ENCODE measurements at regions of chr19 and their contacts with region 1.

Region 1: GRCh38 chr19:6038634-6039405 is 60.9 kb upstream of the RANBP3 start:
- DNase-seq: peak in 1 of 2 donors; percentile 18
- H3K4me3 ChIP-seq: no peak overlapping the region
- H3K27ac ChIP-seq: no peak overlapping the region
- H3K4me1 ChIP-seq: peaks cover 6% of the 10 kb centered on the region
- H3K27me3 ChIP-seq: no peaks in the 10 kb centered on the region
- CTCF ChIP-seq: no peak
- POLR2A ChIP-seq: no peak

Region 2: DNA sequence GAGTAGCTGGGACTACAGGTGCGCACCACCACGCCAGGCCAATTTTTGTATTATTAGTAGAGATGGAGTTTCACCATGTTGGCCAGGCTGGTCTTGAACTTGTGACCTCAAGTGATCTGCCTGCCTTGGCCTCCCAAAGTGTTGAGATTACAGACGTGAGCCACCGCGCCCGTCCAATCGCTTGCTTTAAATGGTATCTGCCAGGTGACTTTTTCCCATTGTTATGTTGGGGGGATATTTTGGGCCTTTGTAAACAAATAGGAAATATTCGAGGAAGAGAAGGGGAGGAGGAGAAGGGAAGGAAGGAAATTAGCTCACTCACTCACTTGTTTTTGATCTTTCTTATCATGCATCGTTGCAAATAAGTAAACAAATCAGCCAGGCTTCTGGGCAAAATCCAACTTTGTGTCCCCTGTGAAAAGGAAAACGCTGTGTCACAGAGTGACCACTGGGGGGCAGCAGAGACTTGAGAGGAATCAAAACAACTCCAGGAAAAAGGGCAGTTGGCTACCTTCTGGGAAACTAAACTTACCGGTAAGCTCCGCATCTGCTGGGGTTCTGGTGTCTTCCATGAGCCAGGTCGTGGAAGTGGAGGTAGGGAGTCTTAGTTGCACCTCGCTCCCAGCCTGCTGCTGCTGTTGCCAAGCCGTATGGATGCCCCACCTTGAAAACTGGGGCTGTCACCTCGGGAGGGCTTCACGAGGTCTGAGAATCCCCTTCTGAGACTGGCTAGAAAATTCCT is 51.6 kb before region 1 on chr19:
- intact Hi-C with region 1: loop called (anchors 10 kb)
- DNase-seq: no peak
- H3K4me3 ChIP-seq: peak overlapping the region; percentile 29 to 36
- H3K27ac ChIP-seq: no peak overlapping the region
- H3K4me1 ChIP-seq: peaks cover 8% of the 10 kb centered on the region
- H3K27me3 ChIP-seq: no peaks in the 10 kb centered on the region
- CTCF ChIP-seq: peak; percentile 75 to 88 (median 85)
- POLR2A ChIP-seq: no peak

Region 3: GRCh38 chr19:6171566-6171965 is 132.7 kb after region 1 on chr19:
- intact Hi-C with region 1: no loop called
- DNase-seq: no peak
- H3K4me3 ChIP-seq: no peak overlapping the region
- H3K27ac ChIP-seq: no peak overlapping the region
- H3K4me1 ChIP-seq: no peaks in the 10 kb centered on the region
- H3K27me3 ChIP-seq: no peaks in the 10 kb centered on the region
- CTCF ChIP-seq: no peak
- POLR2A ChIP-seq: no peak